SK-N-SH (cell line): ENCODE measurements at regions of chr12 and their contacts with region 1.

Region 1: DNA sequence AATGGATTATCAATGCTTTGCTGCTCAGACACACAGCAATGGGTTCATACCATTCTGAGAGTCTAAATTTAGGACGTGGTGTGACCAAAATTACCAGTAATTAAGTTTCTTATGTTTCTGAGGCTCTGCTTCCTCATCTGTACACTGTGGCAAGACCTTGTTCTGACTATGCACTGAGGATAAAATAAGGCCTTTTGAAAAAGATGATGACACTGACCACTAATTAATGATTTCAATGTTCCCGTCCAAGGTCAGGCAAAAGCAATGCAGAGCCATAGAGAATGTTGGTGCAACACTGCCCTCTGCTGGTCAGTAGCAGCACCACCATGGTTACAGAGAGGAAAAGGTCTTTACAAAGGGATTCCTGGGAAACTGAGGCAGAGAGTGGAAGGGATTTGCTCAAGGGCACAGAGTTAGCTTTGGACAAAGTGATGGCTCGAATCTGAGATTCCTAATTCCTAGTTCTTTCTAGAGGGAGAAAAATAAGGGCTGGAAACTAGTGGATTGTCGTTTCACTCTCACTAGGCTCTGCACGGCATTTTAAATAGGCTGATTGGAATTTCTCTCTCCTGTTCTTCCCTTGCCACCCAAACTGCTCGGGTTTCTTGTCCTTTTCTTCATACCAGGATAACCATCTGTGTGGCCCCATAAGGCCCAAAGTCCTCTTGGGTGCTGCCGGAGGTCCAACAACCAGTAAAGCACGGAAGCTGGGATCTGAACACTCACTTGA is 22.3 kb upstream of the P2RX7 start:
- DNase-seq: peak; percentile 65
- H3K4me3 ChIP-seq: no peak overlapping the region; a peak in 1 of 4 replicates
- H3K27ac ChIP-seq: no peak overlapping the region
- H3K4me1 ChIP-seq: no peaks in the 10 kb centered on the region
- H3K27me3 ChIP-seq: no peaks in the 10 kb centered on the region
- CTCF ChIP-seq: peak; percentile 97
- EP300 ChIP-seq: no peak
- RAD21 ChIP-seq: peak; percentile 91

Region 2: GRCh38 chr12:121005346-121005815 is 105.0 kb before region 1 on chr12:
- CTCF ChIA-PET with region 1: interaction called, 15 read pairs
- POLR2A ChIA-PET with region 1: no interaction called
- DNase-seq: peak; percentile 70
- H3K4me3 ChIP-seq: no peak overlapping the region; a peak in 1 of 4 replicates
- H3K27ac ChIP-seq: no peak overlapping the region
- H3K4me1 ChIP-seq: no peaks in the 10 kb centered on the region
- H3K27me3 ChIP-seq: no peaks in the 10 kb centered on the region
- CTCF ChIP-seq: peak; percentile 77
- EP300 ChIP-seq: no peak
- RAD21 ChIP-seq: peak; percentile 63

Region 3: DNA sequence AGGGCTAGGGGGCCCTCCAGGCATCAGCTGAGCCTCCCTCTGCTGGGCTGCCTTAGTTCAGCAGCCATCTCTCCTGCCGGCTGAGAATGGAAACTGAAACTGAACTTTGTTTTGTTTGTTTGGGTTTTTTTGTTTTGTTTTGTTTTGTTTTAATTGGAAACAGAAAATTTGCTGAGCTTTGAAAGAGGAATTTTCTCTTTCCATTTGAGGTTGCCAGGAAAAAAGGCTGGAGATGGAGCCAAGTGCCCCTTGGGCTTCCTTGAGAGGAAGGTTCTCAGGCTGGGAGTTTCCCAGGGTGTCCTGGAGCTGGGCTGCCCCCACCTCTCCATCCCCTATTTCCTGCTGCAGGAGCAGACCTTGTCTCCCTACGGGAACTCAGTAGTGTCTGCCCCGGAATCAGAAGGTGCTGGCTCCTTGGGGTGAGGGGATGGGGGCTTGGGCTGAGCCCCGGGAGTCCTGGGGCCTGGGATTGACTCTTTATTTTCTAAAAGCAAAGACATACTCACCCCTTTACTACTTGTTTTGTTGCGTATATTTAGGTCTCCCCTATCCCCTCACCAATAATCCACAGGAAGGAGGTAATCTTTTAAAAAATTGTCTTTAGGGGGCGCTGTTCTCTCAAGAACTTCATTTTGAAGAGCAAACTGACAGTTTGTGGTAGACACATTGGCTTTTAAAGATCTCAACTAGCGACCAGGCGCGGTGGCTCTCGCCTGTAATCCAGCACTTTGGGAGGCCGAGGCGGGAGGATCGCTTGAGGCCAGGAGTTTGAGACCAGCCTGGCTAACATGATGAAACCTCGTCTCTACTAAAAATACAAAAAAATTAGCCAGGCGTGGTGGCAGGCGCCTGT is 50.0 kb before region 1 on chr12:
- CTCF ChIA-PET with region 1: interaction called, 40 read pairs
- POLR2A ChIA-PET with region 1: no interaction called
- DNase-seq: peak; percentile 48
- H3K4me3 ChIP-seq: no peak overlapping the region
- H3K27ac ChIP-seq: no peak overlapping the region
- H3K4me1 ChIP-seq: peaks cover 0 to 2% of the 10 kb centered on the region in 2 experiments; a peak in 1 of 4 replicates
- H3K27me3 ChIP-seq: no peaks in the 10 kb centered on the region
- CTCF ChIP-seq: peak; percentile 70
- EP300 ChIP-seq: no peak
- RAD21 ChIP-seq: peak; percentile 60

Region 4: DNA sequence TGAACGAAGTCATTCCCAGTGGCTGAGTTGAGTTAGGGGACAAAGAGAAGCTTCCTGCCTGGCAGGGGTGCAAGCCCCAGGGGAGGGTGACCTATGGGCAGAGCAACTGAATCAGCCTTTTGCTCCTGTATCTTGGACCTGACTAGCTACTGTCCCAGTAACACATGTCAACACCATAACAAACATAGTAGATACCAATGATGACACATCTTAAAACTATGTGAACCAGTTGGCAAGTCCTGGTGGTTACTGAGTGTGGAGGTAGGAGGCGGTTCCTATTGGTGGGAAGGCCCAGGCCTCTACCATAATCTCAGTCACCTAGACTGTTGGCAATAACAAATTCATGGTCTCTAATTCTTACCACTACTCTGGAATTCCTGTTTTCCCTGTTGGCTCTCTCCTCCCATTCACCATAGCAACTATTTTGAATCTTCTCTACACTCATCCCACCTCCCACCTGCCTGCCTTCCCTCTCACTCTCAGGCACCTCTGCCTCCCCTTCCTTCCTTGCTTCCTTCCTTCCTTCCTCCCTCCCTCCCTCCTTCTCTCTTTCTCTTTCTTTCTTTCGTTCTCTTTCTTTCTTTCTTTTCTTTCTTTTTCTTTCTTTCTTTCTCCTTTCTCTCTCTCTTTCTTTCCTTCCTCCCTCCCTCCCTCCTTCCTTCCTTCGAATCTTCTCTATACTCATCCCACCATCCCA is 14.2 kb after region 1 on chr12:
- CTCF ChIA-PET with region 1: interaction called, 12 read pairs
- POLR2A ChIA-PET with region 1: no interaction called
- DNase-seq: no peak
- H3K4me3 ChIP-seq: no peak overlapping the region
- H3K27ac ChIP-seq: no peak overlapping the region
- H3K4me1 ChIP-seq: no peaks in the 10 kb centered on the region; a peak in 1 of 4 replicates
- H3K27me3 ChIP-seq: no peaks in the 10 kb centered on the region; the same call in 1 of the 2 replicates
- CTCF ChIP-seq: no peak
- EP300 ChIP-seq: no peak
- RAD21 ChIP-seq: no peak